Activated CD8-positive, alpha-beta memory T cell treated with anti-CD3 and anti-CD28 coated beads, Interleukin-2, amount 10 ng/mL, durations not matched to agents 7 days and 5 days (primary cell): ENCODE measurements at regions of chr4 and their contacts with region 1.

Region 1: DNA sequence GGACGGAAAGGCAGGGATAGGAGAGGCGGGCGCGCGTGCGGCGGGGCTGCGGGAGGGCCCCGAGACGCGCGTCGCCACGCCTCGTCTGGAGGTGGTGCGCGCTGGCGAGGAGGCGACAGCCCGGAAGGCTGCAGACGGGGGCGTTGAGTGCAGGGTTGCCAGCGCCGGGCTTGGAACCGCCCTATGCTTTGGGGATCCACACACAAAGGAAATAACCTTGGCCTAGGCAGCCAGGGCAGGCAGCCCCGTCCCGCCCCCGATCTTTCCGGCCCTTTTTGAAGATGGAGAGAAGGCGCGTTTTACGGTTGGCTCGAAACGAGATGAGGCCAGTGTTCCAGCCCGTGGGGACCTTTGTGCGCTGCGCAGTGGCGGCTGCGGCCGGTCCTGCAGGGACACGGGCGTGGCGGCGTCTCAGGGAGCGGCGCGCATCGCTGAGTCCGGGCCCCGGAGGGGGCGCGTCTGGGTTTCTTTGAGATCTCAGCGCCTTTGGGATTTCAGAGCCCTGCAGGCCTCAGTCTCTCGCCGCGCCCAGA is 50.8 kb upstream of the TRIM2 start:
- DNase-seq: peak; percentile 68
- ATAC-seq: peak; percentile 90
- H3K4me3 Mint-ChIP-seq: peak overlapping the region; percentile 69
- H3K27ac Mint-ChIP-seq: no peak overlapping the region
- H3K4me1 Mint-ChIP-seq: peaks cover 24% of the 10 kb centered on the region
- H3K27me3 Mint-ChIP-seq: peaks cover 87% of the 10 kb centered on the region

Region 2: DNA sequence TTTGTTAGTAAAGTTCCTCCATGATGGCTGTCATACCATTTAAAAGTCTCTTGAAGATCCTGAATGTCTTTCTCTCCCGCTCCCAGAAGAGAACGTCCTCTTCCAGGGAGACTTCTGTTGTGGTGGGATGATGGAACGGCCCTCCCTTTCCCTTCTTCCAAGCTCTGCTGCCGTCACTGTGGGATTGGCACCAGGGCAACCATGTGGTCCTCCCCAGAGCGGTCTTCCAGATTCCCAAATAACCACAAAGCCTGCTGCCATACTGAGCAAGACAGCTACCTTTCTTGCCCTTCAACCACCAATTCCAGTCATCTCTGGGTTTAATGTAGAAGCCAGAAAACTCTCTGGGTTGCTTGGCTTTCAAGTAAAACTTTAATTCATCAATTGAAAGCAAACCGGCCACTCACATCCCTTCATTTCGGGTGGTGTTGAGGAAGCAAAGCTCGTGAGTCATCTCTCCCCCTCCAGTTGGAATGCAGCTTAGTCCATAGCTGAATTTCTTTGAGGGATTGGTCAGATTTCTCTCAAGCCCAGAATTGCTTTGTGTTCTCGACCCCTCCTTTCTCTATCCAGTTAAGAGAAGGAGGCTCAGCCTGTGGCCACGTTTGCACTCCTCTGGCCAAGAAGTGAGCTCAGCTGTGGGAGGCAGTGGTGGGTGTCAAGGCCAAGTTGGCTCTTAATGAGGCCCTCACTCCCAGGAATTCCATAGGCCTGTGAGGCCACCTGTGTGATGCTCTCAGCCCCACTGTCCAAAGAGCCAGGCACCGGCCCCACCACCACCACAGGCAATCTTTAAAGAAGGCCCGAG is 180.4 kb before region 1 on chr4:
- CTCF ChIA-PET with region 1: no interaction called
- DNase-seq: no peak
- ATAC-seq: no peak
- H3K4me3 Mint-ChIP-seq: no peak overlapping the region
- H3K27ac Mint-ChIP-seq: no peak overlapping the region
- H3K4me1 Mint-ChIP-seq: no peaks in the 10 kb centered on the region
- H3K27me3 Mint-ChIP-seq: peaks cover 2% of the 10 kb centered on the region

Region 3: DNA sequence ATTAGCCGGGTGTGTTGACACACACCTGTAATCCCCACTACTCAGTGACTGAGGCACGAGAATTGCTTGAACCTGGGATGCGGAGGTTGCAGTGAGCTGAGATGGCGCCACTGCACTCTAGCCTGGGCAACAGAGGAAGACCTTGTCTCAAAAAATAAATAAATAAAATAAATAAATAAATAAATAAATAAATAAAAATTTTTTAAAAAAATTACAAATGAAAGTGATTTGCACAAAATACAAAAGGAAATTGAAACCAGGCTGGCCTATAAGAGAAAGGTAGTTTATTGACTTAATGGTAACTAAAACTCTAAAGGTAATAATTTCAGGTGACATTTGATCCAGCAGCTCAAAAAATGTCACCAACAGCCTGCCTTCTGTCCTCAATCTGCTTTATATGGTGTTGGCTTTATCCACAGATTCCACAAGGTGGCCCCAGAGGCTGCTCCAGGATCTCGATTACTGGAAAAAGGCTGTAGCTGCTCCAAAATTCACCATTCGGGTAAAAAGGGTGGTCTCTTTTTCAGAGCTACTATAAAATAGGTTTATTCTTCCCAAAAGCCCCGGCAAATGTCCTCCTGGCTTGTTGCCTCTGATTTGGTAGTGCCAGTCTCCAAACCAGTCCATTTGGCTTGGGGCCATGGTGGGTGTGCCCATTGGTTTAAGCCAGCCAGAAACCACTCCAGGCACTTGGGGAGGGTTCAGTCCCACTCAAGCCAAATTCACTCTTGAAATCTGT is 10.5 kb before region 1 on chr4:
- CTCF ChIA-PET with region 1: interaction called, 11 read pairs
- DNase-seq: peak; percentile 59
- ATAC-seq: peak; percentile 39
- H3K4me3 Mint-ChIP-seq: no peak overlapping the region
- H3K27ac Mint-ChIP-seq: no peak overlapping the region
- H3K4me1 Mint-ChIP-seq: no peaks in the 10 kb centered on the region
- H3K27me3 Mint-ChIP-seq: peaks cover 41% of the 10 kb centered on the region

Region 4: GRCh38 chr4:153383131-153383530 is 229.7 kb after region 1 on chr4:
- CTCF ChIA-PET with region 1: no interaction called
- DNase-seq: no peak
- ATAC-seq: no peak
- H3K4me3 Mint-ChIP-seq: no peak overlapping the region
- H3K27ac Mint-ChIP-seq: no peak overlapping the region
- H3K4me1 Mint-ChIP-seq: peaks cover 3% of the 10 kb centered on the region
- H3K27me3 Mint-ChIP-seq: no peaks in the 10 kb centered on the region